ENCODE measurements at regions of chr1 and their contacts with region 1.

Region 1: GRCh38 chr1:23539698-23540266 is 8.7 kb upstream of the E2F2 start:
- DNase-seq: peak; percentile 87
- H3K4me3 Mint-ChIP-seq: peak overlapping the region; percentile 17
- H3K27ac Mint-ChIP-seq: no peak overlapping the region
- H3K4me1 Mint-ChIP-seq: peaks cover 13% of the 10 kb centered on the region
- H3K27me3 Mint-ChIP-seq: no peaks in the 10 kb centered on the region
- CTCF ChIP-seq: peak; percentile 75

Region 2: DNA sequence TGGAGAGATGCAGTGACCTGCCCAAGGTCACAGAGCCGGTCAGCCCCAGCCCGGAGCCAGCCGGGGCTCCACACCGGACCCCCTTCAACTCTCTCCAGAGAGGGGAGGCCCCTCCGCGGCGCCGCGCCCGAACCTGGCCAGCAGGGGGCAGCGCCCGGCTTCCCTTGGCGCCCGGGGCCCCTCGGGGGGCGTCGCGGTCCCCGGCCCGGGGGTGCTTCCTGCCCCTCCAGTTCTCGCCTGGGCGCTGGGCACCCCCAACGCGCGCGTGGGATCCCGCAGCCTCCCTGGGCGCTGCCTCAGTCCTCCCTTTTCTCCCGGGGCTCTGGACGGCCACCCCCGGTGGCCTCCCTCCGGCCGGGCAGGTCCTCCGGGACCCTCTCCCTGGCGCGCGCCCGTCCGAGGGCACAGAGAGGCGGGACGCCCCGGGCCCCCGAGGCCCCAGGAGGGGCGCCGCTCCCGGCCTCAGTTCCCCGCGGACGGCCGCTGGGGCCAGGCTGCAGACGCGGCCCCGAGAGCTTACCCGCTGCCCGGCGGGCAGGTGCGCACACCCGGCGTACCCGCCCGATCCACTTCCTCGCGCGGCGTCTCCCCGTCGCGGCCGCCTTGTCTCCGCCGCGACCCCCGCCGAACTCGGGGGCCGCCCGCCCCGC is 322.9 kb before region 1 on chr1:
- CTCF ChIA-PET with region 1: no interaction called
- intact Hi-C with region 1: loop called (anchors 10 kb)
- DNase-seq: peak; percentile 45
- H3K4me3 Mint-ChIP-seq: peak overlapping the region; percentile 66
- H3K27ac Mint-ChIP-seq: no peak overlapping the region
- H3K4me1 Mint-ChIP-seq: peaks cover 16% of the 10 kb centered on the region
- H3K27me3 Mint-ChIP-seq: peaks cover 39% of the 10 kb centered on the region
- CTCF ChIP-seq: peak; percentile 73

Region 3: DNA sequence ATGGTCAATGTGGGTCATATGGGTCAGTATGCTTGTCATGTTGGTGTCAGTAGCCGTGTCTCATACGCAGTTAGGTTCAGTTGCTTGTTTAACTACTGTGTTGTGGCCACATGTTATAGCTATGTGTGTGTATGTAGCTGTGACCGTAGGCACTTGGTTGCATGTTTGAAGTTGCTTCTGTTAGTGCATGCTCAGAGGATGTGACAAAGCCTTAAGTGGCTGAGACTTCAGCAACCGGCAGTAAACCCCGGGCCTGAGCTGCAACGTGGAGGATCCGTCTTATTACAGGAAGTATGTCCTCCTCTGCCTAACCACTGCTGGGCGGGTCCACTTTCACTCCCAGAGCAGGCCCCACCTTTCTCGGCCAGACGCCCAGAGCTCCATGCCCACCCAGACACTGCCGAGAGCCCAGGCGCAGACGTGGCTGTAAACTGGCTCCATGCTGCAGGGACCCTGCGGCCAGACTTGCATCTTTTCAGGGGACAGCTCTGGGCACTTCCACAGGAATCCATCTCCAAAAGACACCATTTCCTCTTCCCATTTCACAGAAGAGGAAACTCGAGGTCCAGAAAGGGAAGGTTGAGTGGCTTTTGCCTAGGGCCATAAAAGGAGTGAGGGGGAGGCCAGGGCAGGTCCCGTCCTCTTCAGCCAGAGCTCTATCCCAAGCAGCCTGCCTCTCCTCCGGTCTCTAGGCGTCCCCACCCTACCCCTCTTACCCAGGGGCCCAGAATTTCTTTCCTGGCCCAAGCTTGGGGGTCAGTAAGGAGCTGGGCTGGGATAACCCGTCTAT is 117.3 kb before region 1 on chr1:
- CTCF ChIA-PET with region 1: no interaction called
- intact Hi-C with region 1: no loop called
- DNase-seq: no peak
- H3K4me3 Mint-ChIP-seq: no peak overlapping the region
- H3K27ac Mint-ChIP-seq: no peak overlapping the region
- H3K4me1 Mint-ChIP-seq: peaks cover 8% of the 10 kb centered on the region
- H3K27me3 Mint-ChIP-seq: peaks cover 39% of the 10 kb centered on the region
- CTCF ChIP-seq: no peak

Region 4: DNA sequence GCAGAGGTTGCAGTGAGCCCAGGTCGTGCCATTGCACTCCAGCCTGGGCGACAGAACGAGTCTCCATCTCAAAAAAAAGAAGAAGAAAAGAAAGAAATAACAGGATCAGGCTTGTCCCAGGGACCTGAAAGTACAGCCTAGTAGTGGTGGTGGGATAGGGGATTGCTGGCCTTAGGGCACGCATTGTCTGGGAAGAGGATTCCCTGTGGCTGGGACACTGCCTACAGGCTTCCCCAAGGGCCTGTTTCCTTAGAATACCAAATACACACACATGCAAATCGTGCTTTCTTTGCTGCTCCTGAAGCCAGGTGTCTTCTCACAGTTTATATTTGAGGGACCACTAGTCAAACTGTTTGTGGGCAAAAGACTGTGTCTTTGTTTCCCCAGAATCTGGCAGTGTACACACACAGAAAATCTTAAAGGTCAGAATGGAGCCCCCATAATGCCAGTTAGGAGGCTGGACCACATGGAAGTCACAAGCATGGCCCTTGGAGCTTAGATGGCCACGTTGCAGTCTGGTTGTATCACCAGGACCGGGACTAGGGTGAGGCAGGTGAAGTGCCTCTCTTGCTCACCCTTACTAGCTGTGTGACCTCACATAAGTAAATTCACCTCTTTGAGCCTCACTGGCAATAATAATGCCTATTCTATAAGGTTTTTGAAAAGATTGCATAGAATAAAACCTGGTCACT is 43.1 kb before region 1 on chr1:
- CTCF ChIA-PET with region 1: interaction called, 59 read pairs
- intact Hi-C with region 1: loop called (anchors 1 kb)
- DNase-seq: no peak
- H3K4me3 Mint-ChIP-seq: no peak overlapping the region
- H3K27ac Mint-ChIP-seq: no peak overlapping the region
- H3K4me1 Mint-ChIP-seq: no peaks in the 10 kb centered on the region
- H3K27me3 Mint-ChIP-seq: peaks cover 13% of the 10 kb centered on the region
- CTCF ChIP-seq: no peak

Region 5: GRCh38 chr1:23634842-23635651 is 95.3 kb after region 1 on chr1:
- CTCF ChIA-PET with region 1: interaction called, 51 read pairs
- intact Hi-C with region 1: loop called (anchors 1 kb)
- DNase-seq: peak; percentile 56
- H3K4me3 Mint-ChIP-seq: peak overlapping the region; percentile 55
- H3K27ac Mint-ChIP-seq: no peak overlapping the region
- H3K4me1 Mint-ChIP-seq: peaks cover 23% of the 10 kb centered on the region
- H3K27me3 Mint-ChIP-seq: peaks cover 25% of the 10 kb centered on the region
- CTCF ChIP-seq: peak; percentile 55

Region 6: DNA sequence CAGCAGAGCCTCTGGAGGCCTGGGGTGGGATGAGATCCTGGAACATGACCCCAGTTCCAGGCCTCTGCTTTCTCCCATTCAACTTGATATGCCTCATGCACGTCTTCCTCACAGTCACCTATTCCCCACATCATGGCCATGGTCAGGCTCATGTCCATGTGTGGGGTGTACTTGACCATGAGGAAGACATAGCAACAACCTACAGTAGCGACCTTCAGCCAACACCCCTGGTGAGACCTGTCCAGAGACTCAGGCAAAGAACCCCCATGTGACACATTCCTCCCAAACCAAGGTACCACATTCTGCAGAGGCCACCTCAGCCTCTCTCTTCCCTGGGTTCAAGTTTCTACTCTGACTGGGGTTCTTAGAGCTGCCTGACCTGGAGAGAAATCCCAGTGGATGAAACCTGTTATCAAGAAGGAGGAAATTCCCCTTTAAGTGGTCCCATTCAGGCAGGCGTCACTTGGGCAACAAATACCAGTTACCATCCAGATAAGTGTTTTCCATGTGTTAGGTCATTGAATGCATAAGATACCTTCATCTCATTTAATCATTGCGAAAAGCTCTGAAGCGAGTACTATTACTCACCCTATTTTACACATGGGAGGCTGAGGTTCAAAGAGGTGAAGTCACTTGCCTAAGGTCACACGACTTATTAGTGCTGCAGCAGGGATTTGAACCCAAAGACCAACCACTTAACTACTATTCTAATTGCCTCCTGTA is 106.1 kb after region 1 on chr1:
- CTCF ChIA-PET with region 1: no interaction called
- intact Hi-C with region 1: no loop called
- DNase-seq: no peak
- H3K4me3 Mint-ChIP-seq: no peak overlapping the region
- H3K27ac Mint-ChIP-seq: no peak overlapping the region
- H3K4me1 Mint-ChIP-seq: no peaks in the 10 kb centered on the region
- H3K27me3 Mint-ChIP-seq: peaks cover 30% of the 10 kb centered on the region
- CTCF ChIP-seq: no peak

Region 7: GRCh38 chr1:23701996-23702395 is 162.2 kb after region 1 on chr1:
- CTCF ChIA-PET with region 1: no interaction called
- intact Hi-C with region 1: no loop called
- DNase-seq: no peak
- H3K4me3 Mint-ChIP-seq: no peak overlapping the region
- H3K27ac Mint-ChIP-seq: no peak overlapping the region
- H3K4me1 Mint-ChIP-seq: no peaks in the 10 kb centered on the region
- H3K27me3 Mint-ChIP-seq: no peaks in the 10 kb centered on the region
- CTCF ChIP-seq: no peak

Measured in Calu3 (cell line).